Heart left ventricle (tissue), 16 donors: ENCODE measurements at regions of chr17 and their contacts with region 1.

Region 1: GRCh38 chr17:28854457-28855350 is at the start of gene ERAL1:
- DNase-seq: peak; percentile 85 to 89 (median 88)
- ATAC-seq: peak; percentile 98 to 100 (median 100)
- H3K4me3 ChIP-seq: peak within 1 kb of the TSS; percentile 69 to 93 (median 76)
- H3K27ac ChIP-seq: peak within 1 kb of the TSS; percentile 5 to 88 (median 75)
- H3K4me1 ChIP-seq: peaks cover 0 to 17% (median 9%) of the 10 kb centered on the region in 12 donors
- H3K27me3 ChIP-seq: no peaks in the 10 kb centered on the region
- CTCF ChIP-seq: peak in 4 of 12 donors; percentile 5 to 32 (median 14)
- POLR2A ChIP-seq: peak in 1 of 2 donors; percentile 55
- total RNA-seq, gene ERAL1: 28.0 to 78.2 (median 41.1) TPM

Region 2: GRCh38 chr17:28896884-28897768 is 42.4 kb after region 1 on chr17 and contains the start of gene FLOT2:
- intact Hi-C with region 1: loop called in 6 of 10 experiments (anchors 5 to 10 kb)
- DNase-seq: peak; percentile 63 to 82 (median 64)
- ATAC-seq: peak; percentile 25 to 87 (median 77)
- H3K4me3 ChIP-seq: peak within 1 kb of the TSS; percentile 72 to 98 (median 92)
- H3K27ac ChIP-seq: peak within 1 kb of the TSS; percentile 60 to 97 (median 86)
- H3K4me1 ChIP-seq: peaks cover 3 to 69% (median 31%) of the 10 kb centered on the region in 12 donors
- H3K27me3 ChIP-seq: no peaks in the 10 kb centered on the region
- CTCF ChIP-seq: peak in 6 of 12 donors; percentile 9 to 45 (median 20)
- POLR2A ChIP-seq: peak in 1 of 2 donors; percentile 54
- total RNA-seq, gene FLOT2: 81.1 to 139 (median 95.2) TPM

Region 3: DNA sequence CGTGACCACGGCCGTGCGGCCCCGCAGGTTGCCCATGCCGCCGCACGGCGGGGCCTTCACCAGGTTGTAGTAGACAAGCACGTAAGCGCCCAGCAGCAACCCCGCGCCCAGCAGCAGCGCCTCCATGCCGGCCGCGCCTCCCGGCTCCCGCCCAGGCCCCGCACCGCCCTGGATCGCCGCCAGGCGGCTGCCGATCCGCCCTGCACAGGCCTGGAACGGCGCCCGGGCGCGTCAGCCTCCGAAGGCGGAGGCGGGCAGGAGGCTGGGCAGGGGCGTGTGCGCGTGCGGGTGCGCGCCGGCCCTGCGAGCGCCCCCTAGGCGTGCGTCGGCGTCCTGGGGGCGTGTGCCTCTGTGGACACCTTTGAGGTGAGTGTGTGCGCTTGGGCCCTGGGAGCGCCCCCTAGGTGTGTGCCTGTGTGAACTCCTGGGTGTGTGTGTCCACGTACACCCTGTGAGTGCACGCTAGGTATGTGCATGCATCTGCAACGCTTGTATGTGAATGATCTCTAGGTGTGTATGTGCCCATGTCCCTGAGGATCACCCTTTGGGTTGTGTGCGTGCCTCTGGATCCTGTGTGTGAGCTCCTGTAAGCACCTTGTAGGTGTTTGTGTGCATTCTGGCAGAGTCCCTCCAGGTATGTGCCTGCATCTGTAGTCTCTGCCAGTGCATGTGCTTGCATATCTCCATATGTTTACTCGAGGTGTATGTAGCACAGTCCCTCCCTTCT is 48.3 kb after region 1 on chr17 and contains the start of gene DHRS13:
- intact Hi-C with region 1: loop called in 7 of 10 experiments (anchors 5 to 10 kb)
- DNase-seq: peak; percentile 89 to 96 (median 91)
- ATAC-seq: peak; percentile 65 to 92 (median 90)
- H3K4me3 ChIP-seq: peak within 1 kb of the TSS; percentile 51 to 96 (median 76)
- H3K27ac ChIP-seq: peak within 1 kb of the TSS in 11 of 12 donors; percentile 58 to 86 (median 78)
- H3K4me1 ChIP-seq: peaks cover 0 to 40% (median 24%) of the 10 kb centered on the region in 12 donors
- H3K27me3 ChIP-seq: no peaks in the 10 kb centered on the region
- CTCF ChIP-seq: peak; percentile 67 to 93 (median 87)
- POLR2A ChIP-seq: peak in 1 of 2 donors; percentile 38
- total RNA-seq, gene DHRS13: 2.2 to 4.8 (median 2.6) TPM

Region 4: GRCh38 chr17:28908640-28909167 is 54.0 kb after region 1 on chr17:
- intact Hi-C with region 1: loop called in 3 of 10 experiments (anchors 5 kb)
- DNase-seq: peak in 3 of 5 donors; percentile 41 to 48 (median 44)
- ATAC-seq: peak; percentile 48 to 68 (median 65)
- H3K4me3 ChIP-seq: no peak overlapping the region
- H3K27ac ChIP-seq: peak overlapping the region in 10 of 12 donors; percentile 14 to 78 (median 48)
- H3K4me1 ChIP-seq: peaks cover 0 to 29% (median 21%) of the 10 kb centered on the region in 12 donors
- H3K27me3 ChIP-seq: no peaks in the 10 kb centered on the region
- CTCF ChIP-seq: no peak
- POLR2A ChIP-seq: no peak

Region 5: DNA sequence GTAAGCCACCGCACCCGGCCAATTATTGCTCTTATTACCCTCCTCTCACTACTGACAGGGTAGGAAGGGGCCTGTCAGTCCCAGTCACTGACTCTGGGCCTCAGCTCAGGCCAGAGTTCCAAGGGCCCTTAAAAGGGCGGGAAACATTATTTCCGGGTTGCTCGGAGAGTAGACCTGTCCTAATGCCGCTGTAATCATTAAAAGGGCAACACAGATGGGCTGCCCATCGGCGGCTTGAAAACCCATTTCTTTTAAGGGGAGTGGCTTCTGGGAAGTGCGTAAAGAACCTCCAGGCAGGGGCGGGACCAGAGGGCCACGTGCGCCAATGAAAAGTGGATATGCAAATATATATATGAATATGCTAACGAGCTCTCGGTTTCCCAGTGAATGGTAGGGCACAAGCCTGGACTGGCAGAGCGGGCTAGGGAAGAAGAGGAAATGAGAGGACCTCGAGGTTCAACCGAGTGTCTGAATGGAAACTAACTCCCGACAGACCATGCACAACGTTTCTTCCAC is 214.9 kb after region 1 on chr17:
- intact Hi-C with region 1: no loop called
- DNase-seq: peak in 1 of 5 donors; percentile 51
- ATAC-seq: peak in 3 of 4 donors; percentile 34 to 77 (median 38)
- H3K4me3 ChIP-seq: no peak overlapping the region
- H3K27ac ChIP-seq: peak overlapping the region in 1 of 12 donors; percentile 12
- H3K4me1 ChIP-seq: peaks cover 0 to 31% (median 12%) of the 10 kb centered on the region in 12 donors
- H3K27me3 ChIP-seq: no peaks in the 10 kb centered on the region
- CTCF ChIP-seq: no peak
- POLR2A ChIP-seq: no peak